Mammary epithelial cell (primary cell): ENCODE measurements at regions of chr1 and their contacts with region 1.

Region 1: DNA sequence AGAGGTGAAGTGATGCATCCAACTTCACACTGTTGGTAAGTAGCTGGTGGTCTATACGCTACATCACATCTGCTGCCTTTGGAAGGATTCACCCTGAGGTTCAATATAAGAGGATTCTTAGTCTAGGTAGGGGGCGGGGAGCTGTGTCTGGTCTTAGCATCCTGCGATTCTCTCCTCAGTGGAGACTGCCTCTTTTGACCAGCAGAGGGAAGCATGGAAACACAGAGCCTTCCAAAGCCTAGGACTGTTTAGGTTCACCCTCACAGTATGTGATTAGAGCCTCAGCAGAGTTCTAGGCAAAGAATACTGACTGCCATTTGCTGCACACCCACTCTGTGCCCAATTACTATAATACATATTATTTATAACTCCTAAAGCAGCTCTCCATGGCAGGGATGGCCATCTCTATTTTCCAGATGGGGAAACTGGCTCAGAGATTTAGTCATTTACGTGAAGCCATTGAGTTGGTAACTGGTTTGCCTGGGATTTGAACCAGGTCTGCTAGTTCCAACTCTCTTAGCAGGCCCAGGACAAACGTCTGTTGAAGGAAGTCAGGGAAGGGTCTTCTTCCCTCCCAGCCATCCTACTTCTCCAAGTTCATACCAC is 28.9 kb upstream of the EFCAB14 start:
- DNase-seq: peak; percentile 65
- H3K4me3 ChIP-seq: no peak overlapping the region
- H3K27ac ChIP-seq: no peak overlapping the region
- H3K4me1 ChIP-seq: peaks cover 26% of the 10 kb centered on the region
- H3K27me3 ChIP-seq: no peaks in the 10 kb centered on the region
- CTCF ChIP-seq: peak; percentile 89 to 97

Region 2: DNA sequence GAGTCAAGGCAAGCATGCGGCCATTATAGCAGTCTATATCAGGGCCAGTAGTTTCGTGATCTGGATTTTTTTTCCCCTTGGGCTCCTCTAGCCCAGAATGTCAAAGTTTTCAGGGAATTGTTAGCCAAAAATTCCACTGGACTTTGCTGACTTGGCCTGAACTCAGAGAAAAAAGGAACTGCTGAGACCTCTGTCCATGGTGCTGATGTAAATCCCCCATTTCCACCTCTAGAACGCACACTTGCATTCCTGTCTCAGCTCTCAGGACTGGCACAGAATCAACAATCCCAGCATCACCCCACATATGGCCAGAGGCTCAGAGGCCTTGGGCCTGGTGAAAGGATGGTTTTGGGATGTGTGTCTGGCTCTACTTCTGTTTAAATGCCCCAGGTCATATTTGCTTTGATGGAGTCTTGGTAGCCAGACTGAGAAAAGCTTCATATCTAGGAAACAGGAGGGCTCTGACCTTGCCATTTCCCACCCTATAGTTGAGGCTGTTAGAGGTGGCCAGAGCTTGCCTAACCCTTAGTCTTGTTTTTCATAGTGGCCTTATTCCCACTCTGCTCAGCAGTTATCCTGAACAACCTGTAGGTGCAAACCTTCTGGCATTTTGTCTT is 12.0 kb before region 1 on chr1:
- CTCF ChIA-PET with region 1: no interaction called
- dilution Hi-C with region 1: no loop called
- in situ Hi-C with region 1: no loop called
- intact Hi-C with region 1: no loop called
- DNase-seq: peak; percentile 61
- H3K4me3 ChIP-seq: no peak overlapping the region
- H3K27ac ChIP-seq: no peak overlapping the region
- H3K4me1 ChIP-seq: no peaks in the 10 kb centered on the region
- H3K27me3 ChIP-seq: no peaks in the 10 kb centered on the region
- CTCF ChIP-seq: peak; percentile 27 to 71

Region 3: DNA sequence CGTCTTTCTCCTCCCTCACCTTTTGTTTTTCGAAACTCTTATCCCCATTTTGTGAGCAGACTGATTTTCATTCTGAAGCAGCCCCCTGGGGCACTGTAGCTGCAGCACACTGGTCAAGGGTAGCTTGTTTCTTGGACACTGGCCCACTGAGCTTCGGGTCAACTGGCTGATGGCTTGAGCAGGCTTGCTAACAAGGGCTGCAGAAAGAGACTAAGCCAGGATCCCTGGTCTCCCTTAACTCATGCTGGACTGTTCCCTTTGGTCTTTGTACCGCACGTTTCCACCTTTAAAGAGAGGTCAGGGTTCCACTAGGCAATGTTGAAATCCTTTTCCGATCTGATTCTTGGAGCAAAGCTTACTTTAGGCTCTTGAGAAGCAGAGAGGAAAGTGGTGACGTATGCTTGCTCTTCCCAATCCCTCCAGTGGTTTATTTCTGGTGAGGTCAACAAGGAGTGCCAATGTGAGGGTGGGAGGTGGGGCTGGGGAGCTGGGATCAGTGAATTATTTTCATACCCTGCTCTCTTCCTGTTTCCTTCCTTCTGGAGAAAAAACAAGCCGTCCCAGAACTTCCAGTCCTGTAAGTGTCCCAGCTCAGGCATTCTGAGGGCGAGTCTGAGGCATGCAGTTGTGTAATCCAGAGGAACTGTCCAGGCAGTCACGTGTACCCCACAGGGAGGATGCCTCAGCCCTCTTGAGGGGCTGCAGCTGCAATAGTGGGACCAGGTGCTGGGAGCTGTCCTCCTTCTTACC is 58.7 kb after region 1 on chr1:
- CTCF ChIA-PET with region 1: no interaction called
- dilution Hi-C with region 1: loop called (anchors 5 kb)
- in situ Hi-C with region 1: no loop called
- intact Hi-C with region 1: no loop called
- DNase-seq: no peak
- H3K4me3 ChIP-seq: no peak overlapping the region
- H3K27ac ChIP-seq: no peak overlapping the region
- H3K4me1 ChIP-seq: peaks cover 8% of the 10 kb centered on the region
- H3K27me3 ChIP-seq: no peaks in the 10 kb centered on the region
- CTCF ChIP-seq: no peak

Region 4: DNA sequence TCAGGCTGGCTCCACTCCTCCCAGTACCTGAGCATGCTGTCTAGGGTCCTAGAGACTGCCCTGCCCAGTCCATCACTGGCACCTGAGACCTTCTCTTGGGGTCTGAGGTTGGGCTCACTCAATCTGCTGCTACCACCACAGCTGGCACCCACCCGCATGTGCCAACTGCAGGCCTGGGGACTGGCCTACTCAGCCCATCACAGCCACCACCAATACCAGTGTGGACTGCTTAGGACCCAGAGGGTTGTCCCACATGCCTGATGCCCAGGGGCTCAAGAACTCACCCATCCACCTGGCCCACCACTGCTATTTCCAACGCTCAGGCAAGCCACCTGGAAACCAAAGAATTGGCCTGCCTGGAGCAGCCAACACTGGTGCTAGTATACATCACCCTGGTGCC is 114.6 kb after region 1 on chr1:
- CTCF ChIA-PET with region 1: no interaction called
- dilution Hi-C with region 1: no loop called
- in situ Hi-C with region 1: no loop called
- intact Hi-C with region 1: loop called (anchors 5 kb)
- DNase-seq: no peak
- H3K4me3 ChIP-seq: no peak overlapping the region
- H3K27ac ChIP-seq: no peak overlapping the region
- H3K4me1 ChIP-seq: peaks cover 4% of the 10 kb centered on the region
- H3K27me3 ChIP-seq: no peaks in the 10 kb centered on the region
- CTCF ChIP-seq: no peak

Region 5: GRCh38 chr1:46940307-46940706 is 192.5 kb after region 1 on chr1:
- CTCF ChIA-PET with region 1: no interaction called
- dilution Hi-C with region 1: no loop called
- in situ Hi-C with region 1: no loop called
- intact Hi-C with region 1: loop called (anchors 2 kb)
- DNase-seq: no peak
- H3K4me3 ChIP-seq: no peak overlapping the region
- H3K27ac ChIP-seq: no peak overlapping the region
- H3K4me1 ChIP-seq: no peaks in the 10 kb centered on the region
- H3K27me3 ChIP-seq: peaks cover 7% of the 10 kb centered on the region
- CTCF ChIP-seq: no peak

Region 6: GRCh38 chr1:46991083-46991923 is 243.5 kb after region 1 on chr1:
- CTCF ChIA-PET with region 1: no interaction called
- dilution Hi-C with region 1: no loop called
- in situ Hi-C with region 1: loop called (anchors 10 to 25 kb)
- intact Hi-C with region 1: loop called (anchors 1 kb)
- DNase-seq: no peak
- H3K4me3 ChIP-seq: no peak overlapping the region
- H3K27ac ChIP-seq: no peak overlapping the region
- H3K4me1 ChIP-seq: no peaks in the 10 kb centered on the region
- H3K27me3 ChIP-seq: peaks cover 5% of the 10 kb centered on the region
- CTCF ChIP-seq: peak in 1 of 2 donors; percentile 54

Region 7: GRCh38 chr1:48422009-48422408 is 1674.2 kb after region 1 on chr1:
- CTCF ChIA-PET with region 1: no interaction called
- dilution Hi-C with region 1: no loop called
- in situ Hi-C with region 1: no loop called
- intact Hi-C with region 1: no loop called
- DNase-seq: no peak
- H3K4me3 ChIP-seq: no peak overlapping the region
- H3K27ac ChIP-seq: no peak overlapping the region
- H3K4me1 ChIP-seq: no peaks in the 10 kb centered on the region
- H3K27me3 ChIP-seq: no peaks in the 10 kb centered on the region
- CTCF ChIP-seq: no peak